OCI-LY7 (cell line): ENCODE measurements at regions of chr6 and their contacts with region 1.

Region 1: DNA sequence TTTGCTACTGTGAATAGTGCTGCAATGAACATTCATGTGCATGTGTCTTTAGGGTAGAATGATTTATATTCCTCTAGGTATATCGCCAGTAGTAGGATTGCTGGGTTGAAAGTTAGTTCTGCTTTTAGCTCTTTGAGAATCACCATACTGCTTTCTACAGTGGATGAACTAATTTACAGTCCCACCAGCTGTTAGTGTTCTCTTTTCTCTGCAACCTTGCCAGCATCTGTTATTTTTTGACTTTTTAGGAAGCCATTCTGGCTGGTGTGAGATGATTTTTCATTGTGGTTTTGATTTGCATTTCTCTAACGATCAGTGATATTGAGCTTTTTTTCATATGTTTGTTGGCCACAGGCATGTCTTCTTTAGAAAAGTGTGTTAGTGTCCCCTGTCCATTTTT is 40.0 kb downstream of the PLG start:
- DNase-seq: peak; percentile 86
- H3K4me3 ChIP-seq: peak overlapping the region; percentile 57
- H3K27ac ChIP-seq: peak overlapping the region; percentile 100
- H3K4me1 ChIP-seq: peaks cover 70% of the 10 kb centered on the region
- CTCF ChIP-seq: no peak

Region 2: DNA sequence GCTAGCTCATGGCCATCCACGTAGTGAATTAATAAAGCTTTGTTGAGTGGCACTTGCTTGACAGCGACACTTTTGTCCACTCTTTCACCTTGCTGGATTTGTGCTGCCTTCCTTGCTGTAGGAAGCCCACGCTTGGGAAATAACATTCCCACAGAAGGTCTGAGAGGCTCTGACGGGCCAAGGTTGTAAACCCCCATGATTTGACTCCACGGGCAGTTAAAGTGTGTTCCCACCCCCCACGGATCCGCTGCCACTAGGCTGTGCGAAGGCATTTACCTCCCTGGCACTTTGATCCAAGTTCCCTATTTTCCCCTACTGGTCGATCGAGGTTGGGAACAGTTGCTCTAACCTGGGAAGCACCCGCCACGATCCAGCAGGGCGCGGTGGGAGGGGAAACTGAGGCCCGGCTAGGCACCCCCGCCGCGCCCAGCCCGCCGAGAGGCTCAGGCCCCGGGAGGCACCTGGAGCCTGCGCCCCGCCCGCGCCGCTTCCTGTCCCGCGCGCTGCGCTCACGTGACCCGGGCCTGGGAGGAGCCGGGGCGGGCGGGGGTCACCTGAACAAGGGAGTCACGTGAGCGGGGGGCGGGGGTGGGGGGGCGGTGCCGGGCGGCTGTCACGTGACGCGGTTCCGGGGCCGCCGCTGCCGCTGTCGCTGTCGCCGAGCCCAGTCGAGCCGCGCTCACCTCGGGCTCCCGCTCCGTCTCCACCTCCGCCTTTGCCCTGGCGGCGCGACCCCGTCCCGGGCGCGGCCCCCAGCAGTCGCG is 773.5 kb before region 1 on chr6 and contains the start of gene IGF2R:
- CTCF ChIA-PET with region 1: no interaction called
- POLR2A ChIA-PET with region 1: no interaction called
- intact Hi-C with region 1: loop called (anchors 10 kb)
- DNase-seq: peak; percentile 96
- H3K4me3 ChIP-seq: peak within 1 kb of the TSS; percentile 92
- H3K27ac ChIP-seq: peak within 1 kb of the TSS; percentile 19
- H3K4me1 ChIP-seq: peaks cover 17% of the 10 kb centered on the region
- CTCF ChIP-seq: no peak
- total RNA-seq, gene IGF2R: 17.9 and 19.3 TPM in 2 replicates

Region 3: GRCh38 chr6:160254467-160255312 is 487.4 kb before region 1 on chr6:
- CTCF ChIA-PET with region 1: no interaction called
- POLR2A ChIA-PET with region 1: no interaction called
- intact Hi-C with region 1: no loop called
- DNase-seq: no peak
- H3K4me3 ChIP-seq: no peak overlapping the region
- H3K27ac ChIP-seq: no peak overlapping the region
- H3K4me1 ChIP-seq: no peaks in the 10 kb centered on the region
- CTCF ChIP-seq: no peak

Region 4: GRCh38 chr6:160766989-160767660 is 25.0 kb after region 1 on chr6:
- CTCF ChIA-PET with region 1: no interaction called
- POLR2A ChIA-PET with region 1: interaction called, 5 read pairs
- intact Hi-C with region 1: loop called (anchors 2 kb)
- DNase-seq: peak; percentile 77
- H3K4me3 ChIP-seq: peak overlapping the region; percentile 59
- H3K27ac ChIP-seq: no peak overlapping the region
- H3K4me1 ChIP-seq: peaks cover 21% of the 10 kb centered on the region
- CTCF ChIP-seq: peak; percentile 82

Region 5: GRCh38 chr6:160791459-160791858 is 49.4 kb after region 1 on chr6:
- CTCF ChIA-PET with region 1: no interaction called
- POLR2A ChIA-PET with region 1: no interaction called
- intact Hi-C with region 1: no loop called
- DNase-seq: no peak
- H3K4me3 ChIP-seq: no peak overlapping the region
- H3K27ac ChIP-seq: no peak overlapping the region
- H3K4me1 ChIP-seq: no peaks in the 10 kb centered on the region
- CTCF ChIP-seq: no peak

Region 6: DNA sequence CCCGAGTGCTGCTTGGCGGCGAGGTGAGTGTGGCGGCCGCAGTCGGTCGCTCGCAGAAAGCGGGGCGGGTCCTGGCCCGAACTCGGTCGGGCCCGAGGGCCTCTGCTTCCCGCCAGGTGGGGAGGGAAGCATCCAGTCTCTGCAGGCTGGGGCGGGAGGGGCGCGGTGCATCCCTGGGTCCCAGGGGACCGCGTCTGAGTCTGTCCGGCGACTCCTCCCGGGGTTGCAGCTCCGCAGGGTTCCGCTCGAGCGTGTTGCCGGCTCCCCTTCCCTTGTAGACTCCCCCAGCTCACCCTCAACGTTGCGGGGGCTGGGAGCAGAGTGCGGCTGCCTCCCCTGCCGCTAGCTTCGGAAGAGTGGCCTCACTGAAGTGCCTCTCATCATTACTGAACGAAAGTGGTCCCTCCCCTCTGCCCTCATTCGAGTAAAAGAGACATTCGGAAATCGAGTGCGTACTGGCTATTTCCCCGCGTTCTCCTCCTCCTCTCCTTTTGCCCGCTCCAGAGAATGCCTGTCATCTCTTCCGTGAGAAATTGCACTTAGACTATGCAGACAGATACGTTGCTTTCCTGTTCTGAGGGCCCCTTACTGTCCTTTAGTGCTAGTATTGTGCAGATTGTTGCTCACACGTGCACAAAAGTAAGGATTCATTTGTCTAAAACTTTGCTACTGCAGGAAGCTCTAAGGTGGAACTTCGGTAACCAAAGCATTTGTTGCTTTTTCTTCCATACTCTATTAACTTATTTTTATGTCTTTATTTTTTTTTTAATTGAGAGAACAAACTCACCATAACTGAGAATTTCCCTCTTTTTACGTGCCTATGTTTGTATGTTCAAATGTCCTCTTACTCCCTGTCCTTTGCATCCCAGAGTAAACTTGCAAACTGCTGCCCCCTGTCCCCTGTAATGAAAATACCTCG is 250.2 kb after region 1 on chr6:
- CTCF ChIA-PET with region 1: no interaction called
- POLR2A ChIA-PET with region 1: interaction called, 5 read pairs
- intact Hi-C with region 1: loop called (anchors 1 kb)
- DNase-seq: peak; percentile 78
- H3K4me3 ChIP-seq: peak overlapping the region; percentile 86
- H3K27ac ChIP-seq: peak overlapping the region; percentile 76
- H3K4me1 ChIP-seq: peaks cover 13% of the 10 kb centered on the region
- CTCF ChIP-seq: peak; percentile 87

Region 7: GRCh38 chr6:161169696-161170095 is 427.6 kb after region 1 on chr6:
- CTCF ChIA-PET with region 1: no interaction called
- POLR2A ChIA-PET with region 1: no interaction called
- intact Hi-C with region 1: loop called (anchors 2 kb)
- DNase-seq: peak; percentile 8
- H3K4me3 ChIP-seq: peak overlapping the region; percentile 25
- H3K27ac ChIP-seq: peak overlapping the region; percentile 77
- H3K4me1 ChIP-seq: peaks cover 34% of the 10 kb centered on the region
- CTCF ChIP-seq: no peak